ENCODE measurements at regions of chr7 and their contacts with region 1.

Region 1: DNA sequence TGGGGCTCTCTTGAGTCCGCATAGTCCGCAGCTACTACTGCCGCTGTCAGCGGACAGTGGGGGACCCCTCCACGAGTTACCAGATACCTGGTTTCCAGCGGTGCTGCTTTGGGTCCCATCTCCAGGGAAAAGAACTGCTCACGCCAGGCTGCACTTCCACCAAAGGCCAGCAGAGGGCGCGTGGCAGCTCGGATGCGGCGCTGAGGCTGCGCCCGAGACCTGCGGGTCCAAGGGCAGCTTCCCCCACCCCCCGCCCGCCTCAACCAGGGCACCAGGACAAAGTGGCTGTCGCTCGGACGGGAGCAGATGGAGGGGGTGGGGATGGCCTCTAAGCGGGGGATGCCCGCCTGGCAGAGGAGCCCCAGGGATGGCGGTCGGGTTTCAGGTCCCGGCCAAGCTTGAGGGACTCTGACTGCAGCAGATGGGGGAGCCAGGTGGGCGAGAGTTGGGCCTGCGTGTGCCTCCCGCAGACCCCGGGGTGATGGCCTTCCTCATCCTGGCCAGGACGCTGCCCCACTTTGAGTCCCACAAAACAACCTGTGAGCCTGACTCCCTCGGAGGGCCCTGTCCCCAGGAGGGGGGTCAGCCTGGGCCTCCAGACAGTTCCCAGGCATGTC is 23.8 kb upstream of the ZNF735 start:
- DNase-seq: peak in 1 of 4 donors; percentile 75
- ATAC-seq: peak; percentile 49
- H3K4me3 ChIP-seq: no peak overlapping the region
- H3K27ac ChIP-seq: no peak overlapping the region
- H3K4me1 ChIP-seq: no peaks in the 10 kb centered on the region
- H3K27me3 ChIP-seq: peaks cover 9 to 34% of the 10 kb centered on the region in 2 donors
- CTCF ChIP-seq: peak; percentile 68 to 73

Region 2: GRCh38 chr7:64618785-64619456 is 435.7 kb after region 1 on chr7:
- intact Hi-C with region 1: loop called (anchors 5 to 10 kb)
- DNase-seq: peak in 1 of 4 donors; percentile 2
- ATAC-seq: peak; percentile 86
- H3K4me3 ChIP-seq: no peak overlapping the region
- H3K27ac ChIP-seq: no peak overlapping the region
- H3K4me1 ChIP-seq: no peaks in the 10 kb centered on the region
- H3K27me3 ChIP-seq: no peaks in the 10 kb centered on the region
- CTCF ChIP-seq: peak; percentile 49 to 60

Region 3: DNA sequence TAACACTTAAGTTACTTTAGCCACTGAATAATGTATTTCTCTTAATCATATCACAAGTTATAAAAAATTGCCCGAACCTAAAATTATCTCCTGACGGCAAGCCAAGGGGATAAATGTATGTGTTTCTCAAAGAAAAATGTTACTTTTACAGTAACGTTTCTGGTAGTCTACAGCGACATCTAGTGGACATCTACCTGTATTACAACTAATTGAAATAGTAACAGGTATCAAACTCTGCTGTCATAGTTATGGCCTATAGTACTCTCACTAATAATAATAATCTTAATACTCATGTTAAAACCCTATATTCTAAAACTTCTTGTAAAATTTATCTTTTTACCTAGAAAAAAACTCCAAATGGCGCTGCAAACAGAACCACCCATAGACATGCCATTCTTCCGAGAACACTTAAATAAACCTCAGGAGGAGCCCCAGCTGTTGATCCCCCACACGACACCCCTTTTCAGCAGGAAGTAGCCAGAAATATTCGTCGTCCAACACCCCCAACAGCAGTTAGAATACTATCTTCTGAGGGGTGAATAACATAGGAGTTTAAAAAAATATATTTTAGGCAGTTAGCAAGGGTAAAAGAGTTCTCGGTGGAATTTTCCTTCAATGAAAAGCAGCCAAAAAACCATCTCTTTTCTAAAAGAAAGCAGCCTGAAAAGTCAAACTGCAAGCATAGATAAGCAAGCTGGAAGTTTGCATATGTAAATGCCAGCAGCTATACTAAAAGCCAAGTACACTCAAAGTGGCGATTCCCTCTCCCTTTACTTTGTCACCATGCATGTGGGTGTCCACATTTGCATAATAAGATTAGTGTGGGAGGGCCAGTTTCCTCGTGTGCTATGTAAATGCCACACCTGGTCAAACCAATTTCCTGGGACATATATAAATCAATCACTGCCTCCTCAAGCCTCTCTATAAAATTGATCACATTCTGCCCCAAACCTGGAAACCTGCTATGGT is 442.2 kb after region 1 on chr7:
- intact Hi-C with region 1: loop called in 1 of 2 experiments (anchors 10 kb)
- DNase-seq: no peak
- ATAC-seq: peak; percentile 44
- H3K4me3 ChIP-seq: no peak overlapping the region
- H3K27ac ChIP-seq: no peak overlapping the region
- H3K4me1 ChIP-seq: no peaks in the 10 kb centered on the region
- H3K27me3 ChIP-seq: no peaks in the 10 kb centered on the region
- CTCF ChIP-seq: peak; percentile 78 to 82